ENCODE measurements at regions of chr15 and their contacts with region 1.

Region 1: DNA sequence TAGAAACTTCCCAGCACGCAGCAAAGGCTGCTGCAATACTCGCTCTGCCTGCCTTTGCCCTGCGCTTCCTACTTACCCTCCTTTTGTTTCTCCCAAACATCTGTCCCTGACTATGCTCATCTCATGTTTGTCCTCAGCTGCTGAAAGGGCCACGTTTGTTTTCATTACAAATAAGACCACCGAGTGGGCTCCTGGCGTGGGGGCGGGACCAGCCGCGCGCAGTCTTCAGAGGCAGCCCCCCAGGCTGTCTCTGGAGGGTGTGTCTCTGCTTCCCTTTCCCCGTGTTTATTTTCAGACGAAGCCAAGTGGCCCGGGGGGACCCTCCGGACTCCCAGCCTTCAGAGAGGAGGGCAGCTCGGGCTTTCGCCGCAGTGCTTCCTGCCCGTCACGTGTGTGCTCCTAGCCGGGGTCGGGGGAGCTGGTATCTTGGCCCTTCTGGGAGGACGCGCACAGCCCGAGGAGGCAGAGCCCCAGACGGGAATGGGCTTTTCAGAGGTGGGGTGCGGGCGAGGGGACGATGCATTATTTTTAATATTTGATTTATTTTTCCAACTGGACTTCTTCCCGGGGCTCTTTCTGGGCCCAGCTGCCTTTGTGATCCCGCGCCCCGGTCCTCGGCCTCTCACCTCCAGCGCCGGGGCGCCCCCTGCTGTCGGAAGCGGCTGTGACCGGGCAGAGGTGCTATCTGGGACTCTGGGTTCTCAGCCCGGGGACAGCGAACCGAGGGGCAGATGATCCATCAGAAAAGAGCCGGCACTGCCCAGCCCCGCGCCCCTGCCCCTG is 70.0 kb upstream of the CGNL1 start:
- DNase-seq: peak; percentile 95
- ATAC-seq: peak; percentile 94

Region 2: DNA sequence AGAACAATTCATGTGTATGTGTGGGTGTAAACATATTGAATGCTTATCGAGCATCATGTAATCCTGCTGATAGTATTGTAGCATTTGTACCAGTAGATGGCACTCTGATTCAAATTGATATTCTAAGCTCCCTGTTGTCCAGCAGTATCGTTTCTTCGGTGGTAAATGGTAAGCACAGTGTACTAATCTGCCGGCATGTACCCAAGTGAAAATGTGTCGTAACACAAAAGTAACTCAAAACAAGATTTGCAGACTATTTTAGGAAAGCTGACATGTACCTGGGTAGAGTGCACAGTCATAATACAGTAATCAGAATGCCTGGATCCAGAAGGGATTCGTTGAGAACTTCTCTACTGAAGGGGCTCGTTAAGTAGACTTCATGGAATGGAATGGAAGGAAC is 809.7 kb before region 1 on chr15:
- intact Hi-C with region 1: loop called (anchors 5 kb)
- DNase-seq: no peak
- ATAC-seq: peak; percentile 92

Region 3: DNA sequence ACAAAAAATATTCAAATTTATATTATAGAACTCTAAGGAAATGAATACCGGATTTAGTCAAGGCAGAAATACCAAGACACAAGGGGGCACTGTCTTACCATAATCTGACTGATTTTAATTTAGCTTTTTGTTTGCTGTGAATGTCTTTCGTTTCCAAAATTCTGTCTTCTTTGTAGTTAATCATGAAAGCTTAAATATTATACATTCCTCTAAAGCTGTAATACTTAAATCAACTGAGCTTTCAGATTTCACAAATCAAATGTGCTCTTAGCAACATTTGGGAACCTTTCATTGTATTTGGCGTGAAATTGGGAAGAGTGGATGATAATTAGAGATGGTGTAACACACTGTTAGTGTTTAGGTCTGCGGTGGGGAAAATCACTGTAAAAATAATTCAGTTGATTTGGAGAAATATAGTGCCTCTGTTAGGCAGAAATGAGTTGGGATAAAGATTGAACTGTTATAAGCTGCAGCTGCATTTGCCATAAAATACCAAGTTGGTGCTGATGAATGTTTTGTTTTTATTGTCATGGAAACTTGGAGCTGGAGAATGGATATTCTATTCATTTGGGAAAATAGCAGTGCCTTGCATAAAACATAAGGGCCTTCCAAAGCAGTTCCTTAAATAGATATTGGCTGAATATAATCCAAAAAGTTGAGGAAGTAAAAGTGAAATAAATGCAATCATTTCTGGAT is 159.7 kb before region 1 on chr15:
- intact Hi-C with region 1: loop called (anchors 5 kb)
- DNase-seq: no peak
- ATAC-seq: peak; percentile 62